T-cell (primary cell): ENCODE measurements at regions of chr17 and their contacts with region 1.

Region 1: GRCh38 chr17:67221062-67221998 is 23.7 kb downstream of the HELZ start:
- DNase-seq: peak in 21 of 35 experiments; percentile 9 to 74 (median 34)
- ATAC-seq: peak in 2 of 4 experiments; percentile 45 to 82
- H3K4me3 ChIP-seq: no peak overlapping the region
- H3K4me3 Mint-ChIP-seq: no peak overlapping the region
- H3K27ac ChIP-seq: no peak overlapping the region
- H3K27ac Mint-ChIP-seq: peak overlapping the region in 1 of 2 donors; percentile 11
- H3K4me1 ChIP-seq: peaks cover 0 to 21% of the 10 kb centered on the region in 2 experiments
- H3K4me1 Mint-ChIP-seq: peaks cover 49 to 64% (median 55%) of the 10 kb centered on the region in 3 donors
- H3K27me3 ChIP-seq: no peaks in the 10 kb centered on the region
- H3K27me3 Mint-ChIP-seq: no peaks in the 10 kb centered on the region

Region 2: GRCh38 chr17:67293251-67294203 is 72.2 kb after region 1 on chr17:
- CTCF ChIA-PET with region 1: interaction called, 10 to 49 read pairs
- POLR2A ChIA-PET with region 1: no interaction called
- DNase-seq: peak; percentile 28 to 82 (median 61)
- ATAC-seq: peak; percentile 89 to 94 (median 91)
- H3K4me3 ChIP-seq: no peak overlapping the region
- H3K4me3 Mint-ChIP-seq: peak overlapping the region in 2 of 3 donors; percentile 15 to 31
- H3K27ac ChIP-seq: no peak overlapping the region
- H3K27ac Mint-ChIP-seq: no peak overlapping the region
- H3K4me1 ChIP-seq: peaks cover 0 to 8% of the 10 kb centered on the region in 2 experiments
- H3K4me1 Mint-ChIP-seq: peaks cover 0 to 6% (median 0%) of the 10 kb centered on the region in 3 donors
- H3K27me3 ChIP-seq: no peaks in the 10 kb centered on the region
- H3K27me3 Mint-ChIP-seq: no peaks in the 10 kb centered on the region